B cell (primary cell): ENCODE measurements at regions of chr12 and their contacts with region 1.

Region 1: GRCh38 chr12:92505254-92506231 is 197.2 kb upstream of the PLEKHG7 start:
- DNase-seq: peak; percentile 75
- ATAC-seq: peak; percentile 61
- H3K4me3 ChIP-seq: peak overlapping the region; percentile 16 to 62 (median 43)
- H3K4me3 Mint-ChIP-seq: peak overlapping the region; percentile 73
- H3K27ac ChIP-seq: peak overlapping the region; percentile 79 to 91
- H3K27ac Mint-ChIP-seq: peak overlapping the region; percentile 87
- H3K4me1 ChIP-seq: peaks cover 60 to 62% of the 10 kb centered on the region in 2 donors
- H3K4me1 Mint-ChIP-seq: peaks cover 65% of the 10 kb centered on the region
- H3K27me3 ChIP-seq: no peaks in the 10 kb centered on the region
- H3K27me3 Mint-ChIP-seq: no peaks in the 10 kb centered on the region
- CTCF ChIP-seq: no peak

Region 2: DNA sequence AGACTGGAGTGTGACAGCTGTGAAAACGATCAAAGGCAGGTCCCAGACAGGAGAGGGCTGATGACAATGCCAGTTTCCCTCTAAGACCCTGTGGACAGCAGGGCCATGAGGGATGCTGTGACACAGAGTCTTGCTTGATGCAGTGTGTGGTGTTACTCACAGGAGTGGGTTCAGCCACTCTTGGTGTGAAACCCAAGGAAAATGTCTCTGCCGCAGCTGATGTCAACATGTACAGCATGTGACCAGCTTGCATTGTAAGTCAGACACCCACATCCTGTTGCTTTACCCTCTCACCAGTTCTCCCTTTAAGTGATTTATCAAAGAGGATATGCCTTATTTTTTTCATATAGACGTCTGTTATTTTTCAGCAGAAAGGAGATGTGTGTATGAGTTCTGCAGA is 628.5 kb before region 1 on chr12:
- CTCF ChIA-PET with region 1: no interaction called
- POLR2A ChIA-PET with region 1: no interaction called
- intact Hi-C with region 1: loop called (anchors 10 kb)
- DNase-seq: peak; percentile 84
- ATAC-seq: peak; percentile 90
- H3K4me3 ChIP-seq: peak overlapping the region in 1 of 5 experiments; percentile 10
- H3K4me3 Mint-ChIP-seq: peak overlapping the region; percentile 74
- H3K27ac ChIP-seq: peak overlapping the region; percentile 48 to 76
- H3K27ac Mint-ChIP-seq: peak overlapping the region; percentile 93
- H3K4me1 ChIP-seq: peaks cover 19 to 22% of the 10 kb centered on the region in 2 donors
- H3K4me1 Mint-ChIP-seq: peaks cover 27% of the 10 kb centered on the region
- H3K27me3 ChIP-seq: no peaks in the 10 kb centered on the region
- H3K27me3 Mint-ChIP-seq: no peaks in the 10 kb centered on the region
- CTCF ChIP-seq: no peak

Region 3: DNA sequence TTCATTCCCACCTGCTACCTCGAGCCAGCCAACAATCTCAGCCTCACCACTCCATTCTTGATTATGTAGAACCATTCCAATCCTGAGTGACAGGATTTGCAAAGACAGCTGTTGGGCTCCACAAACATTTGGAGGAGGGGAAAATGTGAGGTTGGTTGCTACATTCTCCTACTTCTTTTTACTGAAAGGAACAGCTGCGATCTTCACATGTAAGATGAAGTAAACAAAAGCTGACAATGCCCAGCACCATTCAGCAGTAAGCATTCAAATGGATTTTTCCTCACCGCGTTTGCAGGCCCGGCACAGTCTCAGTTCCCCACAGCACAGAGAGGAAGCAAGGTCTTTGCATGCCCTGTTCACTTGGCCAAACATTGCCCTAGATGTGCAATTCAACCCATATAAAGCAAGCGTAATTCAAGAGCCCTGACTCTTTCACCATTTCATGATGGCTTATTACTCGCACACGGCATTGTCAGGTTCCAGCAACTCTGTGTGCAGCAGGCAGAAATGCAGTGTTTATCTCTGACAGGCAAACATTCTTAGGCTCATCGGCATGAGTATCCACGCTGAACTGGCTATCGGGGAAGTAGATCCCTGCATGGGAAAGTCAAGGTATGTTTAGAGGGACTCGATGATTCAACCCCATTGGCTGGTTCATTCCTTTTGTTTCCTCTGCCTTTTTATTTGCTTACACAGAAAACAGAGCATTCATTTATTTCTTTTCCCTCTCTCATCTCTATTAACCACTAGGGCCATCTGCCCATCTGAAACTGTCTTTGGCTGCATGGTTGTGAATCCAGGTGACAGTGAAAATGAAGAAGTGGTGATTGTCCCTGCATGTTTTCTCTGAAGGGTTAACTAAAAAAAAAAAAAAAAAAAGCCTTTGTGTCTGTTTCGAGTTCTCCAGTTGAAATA is 38.9 kb before region 1 on chr12:
- CTCF ChIA-PET with region 1: interaction called, 11 read pairs
- POLR2A ChIA-PET with region 1: interaction called, 6 read pairs
- intact Hi-C with region 1: loop called (anchors 2 kb)
- DNase-seq: peak; percentile 87
- ATAC-seq: peak; percentile 76
- H3K4me3 ChIP-seq: peak overlapping the region; percentile 61 to 93 (median 68)
- H3K4me3 Mint-ChIP-seq: peak overlapping the region; percentile 94
- H3K27ac ChIP-seq: peak overlapping the region; percentile 85 to 93
- H3K27ac Mint-ChIP-seq: peak overlapping the region; percentile 95
- H3K4me1 ChIP-seq: peaks cover 80 to 83% of the 10 kb centered on the region in 2 donors
- H3K4me1 Mint-ChIP-seq: peaks cover 81% of the 10 kb centered on the region
- H3K27me3 ChIP-seq: no peaks in the 10 kb centered on the region
- H3K27me3 Mint-ChIP-seq: no peaks in the 10 kb centered on the region
- CTCF ChIP-seq: no peak

Region 4: GRCh38 chr12:92493816-92494215 is 11.7 kb before region 1 on chr12:
- CTCF ChIA-PET with region 1: interaction called, 49 read pairs
- POLR2A ChIA-PET with region 1: interaction called, 6 read pairs
- intact Hi-C with region 1: no loop called
- DNase-seq: no peak
- ATAC-seq: no peak
- H3K4me3 ChIP-seq: no peak overlapping the region
- H3K4me3 Mint-ChIP-seq: no peak overlapping the region
- H3K27ac ChIP-seq: peak overlapping the region in 1 of 2 donors; percentile 53
- H3K27ac Mint-ChIP-seq: peak overlapping the region; percentile 81
- H3K4me1 ChIP-seq: peaks cover 72 to 73% of the 10 kb centered on the region in 2 donors
- H3K4me1 Mint-ChIP-seq: peaks cover 71% of the 10 kb centered on the region
- H3K27me3 ChIP-seq: no peaks in the 10 kb centered on the region
- H3K27me3 Mint-ChIP-seq: no peaks in the 10 kb centered on the region
- CTCF ChIP-seq: no peak

Region 5: DNA sequence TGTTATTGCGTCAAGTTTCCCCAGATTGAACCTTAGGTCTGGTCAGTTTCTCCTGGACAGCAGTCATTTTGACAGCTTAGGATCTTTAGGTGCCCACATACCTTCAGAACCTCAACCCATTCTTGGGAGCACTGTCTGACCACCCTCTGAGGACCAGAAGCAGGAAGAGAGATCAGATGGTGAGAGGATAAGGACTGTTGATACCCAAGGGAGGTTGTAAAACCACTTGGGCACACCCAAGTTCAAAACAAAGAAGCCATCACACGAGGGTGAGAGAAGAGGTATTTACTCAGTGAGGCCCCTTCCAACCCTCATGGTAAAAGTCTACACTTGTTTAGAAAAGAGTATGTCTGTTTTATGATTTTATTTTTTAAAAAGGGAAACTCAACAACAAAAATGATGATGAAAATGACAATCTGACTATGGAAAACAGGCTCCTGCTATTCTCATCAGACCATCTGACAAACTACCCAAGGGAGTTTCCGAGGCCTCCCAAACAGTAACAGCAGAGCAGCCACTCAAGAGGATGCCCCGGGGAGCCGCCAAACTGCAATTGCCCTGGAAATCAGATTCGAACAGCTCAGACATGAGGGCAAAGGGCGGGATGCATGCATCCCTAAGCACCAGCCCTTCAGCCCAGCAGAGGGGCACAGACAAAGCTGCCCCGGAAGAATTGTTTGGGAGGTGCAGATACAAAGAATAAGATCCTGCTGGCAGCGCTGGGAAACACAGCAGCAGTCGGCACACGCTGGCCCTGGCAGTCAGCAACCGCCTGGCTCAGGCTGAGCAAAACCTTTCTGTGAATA is 34.6 kb after region 1 on chr12:
- CTCF ChIA-PET with region 1: interaction called, 12 read pairs
- POLR2A ChIA-PET with region 1: interaction called, 5 read pairs
- intact Hi-C with region 1: loop called (anchors 2 kb)
- DNase-seq: peak; percentile 52
- ATAC-seq: peak; percentile 59
- H3K4me3 ChIP-seq: peak overlapping the region in 1 of 5 experiments; percentile 27
- H3K4me3 Mint-ChIP-seq: peak overlapping the region; percentile 84
- H3K27ac ChIP-seq: peak overlapping the region; percentile 68 to 93
- H3K27ac Mint-ChIP-seq: peak overlapping the region; percentile 97
- H3K4me1 ChIP-seq: peaks cover 64 to 68% of the 10 kb centered on the region in 2 donors
- H3K4me1 Mint-ChIP-seq: peaks cover 71% of the 10 kb centered on the region
- H3K27me3 ChIP-seq: no peaks in the 10 kb centered on the region
- H3K27me3 Mint-ChIP-seq: no peaks in the 10 kb centered on the region
- CTCF ChIP-seq: no peak

Region 6: GRCh38 chr12:92561543-92561899 is 56.0 kb after region 1 on chr12:
- CTCF ChIA-PET with region 1: interaction called, 18 read pairs
- POLR2A ChIA-PET with region 1: interaction called, 8 read pairs
- intact Hi-C with region 1: loop called (anchors 5 kb)
- DNase-seq: no peak
- ATAC-seq: no peak
- H3K4me3 ChIP-seq: no peak overlapping the region
- H3K4me3 Mint-ChIP-seq: peak overlapping the region; percentile 27
- H3K27ac ChIP-seq: peak overlapping the region in 1 of 2 donors; percentile 60
- H3K27ac Mint-ChIP-seq: peak overlapping the region; percentile 50
- H3K4me1 ChIP-seq: peaks cover 53 to 62% of the 10 kb centered on the region in 2 donors
- H3K4me1 Mint-ChIP-seq: peaks cover 82% of the 10 kb centered on the region
- H3K27me3 ChIP-seq: no peaks in the 10 kb centered on the region
- H3K27me3 Mint-ChIP-seq: no peaks in the 10 kb centered on the region
- CTCF ChIP-seq: no peak